MCF 10A (cell line): ENCODE measurements at regions of chr12 and their contacts with region 1.

Region 1: DNA sequence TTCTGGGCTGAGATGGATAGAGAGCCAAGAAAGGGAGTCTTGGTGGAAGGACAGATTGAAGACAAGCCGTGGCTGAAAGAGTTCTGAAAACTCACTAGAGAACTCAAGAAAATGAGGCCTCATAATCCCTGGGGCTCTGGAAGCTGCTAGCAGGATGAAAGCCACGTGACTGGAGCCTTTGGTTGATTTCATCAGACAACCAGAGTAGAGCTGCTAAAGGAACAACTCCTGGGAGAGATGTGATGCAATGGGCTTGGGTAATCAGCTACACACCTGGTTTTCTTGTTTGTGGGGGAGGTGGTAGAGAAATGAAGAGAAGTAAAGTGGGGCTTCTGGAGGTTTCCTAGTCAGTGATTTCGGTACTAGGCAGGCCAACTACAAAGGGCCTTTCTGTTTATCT is 13.4 kb downstream of the CSRNP2 start:
- DNase-seq: peak; percentile 97
- H3K4me3 Mint-ChIP-seq: peak overlapping the region; percentile 35
- H3K27ac Mint-ChIP-seq: peak overlapping the region; percentile 83
- H3K4me1 Mint-ChIP-seq: peaks cover 10% of the 10 kb centered on the region
- H3K27me3 Mint-ChIP-seq: no peaks in the 10 kb centered on the region
- CTCF ChIP-seq: no peak

Region 2: DNA sequence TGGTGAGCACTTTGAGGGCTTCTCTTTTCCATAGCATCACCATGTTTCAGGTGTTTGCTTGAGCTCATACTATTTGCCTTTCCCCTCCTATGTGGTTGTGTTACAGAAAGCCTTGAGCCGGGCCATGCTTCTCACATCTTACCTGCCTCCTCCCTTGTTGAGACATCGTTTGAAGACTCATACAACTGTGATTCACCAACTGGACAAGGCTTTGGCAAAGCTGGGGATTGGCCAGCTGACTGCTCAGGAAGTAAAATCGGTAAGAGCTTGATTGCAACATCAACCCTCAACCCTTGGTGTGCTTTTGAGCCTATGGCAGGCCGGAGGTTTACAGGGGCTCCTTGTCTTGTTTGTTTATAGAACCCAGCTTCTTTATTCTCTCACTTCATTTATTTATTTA is 13.8 kb before region 1 on chr12:
- CTCF ChIA-PET with region 1: interaction called, 4 read pairs
- POLR2A ChIA-PET with region 1: interaction called, 16 read pairs
- intact Hi-C with region 1: no loop called
- DNase-seq: peak; percentile 97
- H3K4me3 Mint-ChIP-seq: peak overlapping the region; percentile 3
- H3K27ac Mint-ChIP-seq: peak overlapping the region; percentile 3
- H3K4me1 Mint-ChIP-seq: peaks cover 15% of the 10 kb centered on the region
- H3K27me3 Mint-ChIP-seq: no peaks in the 10 kb centered on the region
- CTCF ChIP-seq: no peak

Region 3: DNA sequence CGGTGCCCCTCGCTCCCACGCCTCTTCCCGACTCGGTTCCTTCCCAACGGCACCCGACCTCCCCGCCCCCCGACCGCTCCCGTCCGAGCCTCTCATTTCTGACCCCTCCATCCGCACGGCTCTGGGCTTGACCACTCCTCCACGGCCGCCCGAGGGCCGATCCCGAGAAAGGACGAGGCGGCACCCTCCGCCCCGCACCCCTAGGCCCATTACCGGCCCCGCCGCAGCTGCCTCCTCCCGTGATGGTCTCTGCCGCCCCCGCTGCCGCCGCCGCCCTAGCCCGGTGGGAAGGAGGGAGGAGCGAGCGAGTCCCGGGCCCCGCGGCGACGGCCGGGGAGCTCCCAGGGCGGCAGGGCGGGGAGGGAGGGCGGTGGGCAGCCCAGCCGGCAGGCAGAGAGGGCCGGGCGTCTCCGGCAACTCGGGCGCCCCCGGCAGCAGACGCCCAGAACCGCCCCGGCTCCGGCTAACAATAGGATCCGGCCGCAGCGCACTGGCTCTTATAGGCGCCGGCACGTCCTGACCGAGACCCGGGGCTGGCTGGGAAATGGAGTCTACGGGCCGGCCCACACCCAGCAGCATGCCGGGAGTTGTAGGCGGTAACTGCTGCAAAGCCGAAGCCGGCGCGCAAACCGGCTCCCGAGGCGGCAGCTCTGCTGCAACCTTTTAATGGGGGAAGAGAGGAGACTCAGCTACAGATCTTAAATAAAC is 13.3 kb after region 1 on chr12 and contains the start of gene CSRNP2:
- CTCF ChIA-PET with region 1: interaction called, 4 read pairs
- POLR2A ChIA-PET with region 1: interaction called, 70 read pairs
- intact Hi-C with region 1: no loop called
- DNase-seq: peak; percentile 93
- H3K4me3 Mint-ChIP-seq: peak within 1 kb of the TSS; percentile 88
- H3K27ac Mint-ChIP-seq: peak within 1 kb of the TSS; percentile 46
- H3K4me1 Mint-ChIP-seq: peaks cover 13% of the 10 kb centered on the region
- H3K27me3 Mint-ChIP-seq: no peaks in the 10 kb centered on the region
- CTCF ChIP-seq: no peak
- total RNA-seq, gene CSRNP2: 41.4 and 46.3 TPM in 2 replicates

Region 4: GRCh38 chr12:51192284-51192671 is 122.3 kb after region 1 on chr12:
- CTCF ChIA-PET with region 1: no interaction called
- POLR2A ChIA-PET with region 1: no interaction called
- intact Hi-C with region 1: no loop called
- DNase-seq: no peak
- H3K4me3 Mint-ChIP-seq: no peak overlapping the region
- H3K27ac Mint-ChIP-seq: no peak overlapping the region
- H3K4me1 Mint-ChIP-seq: no peaks in the 10 kb centered on the region
- H3K27me3 Mint-ChIP-seq: no peaks in the 10 kb centered on the region
- CTCF ChIP-seq: no peak

Region 5: DNA sequence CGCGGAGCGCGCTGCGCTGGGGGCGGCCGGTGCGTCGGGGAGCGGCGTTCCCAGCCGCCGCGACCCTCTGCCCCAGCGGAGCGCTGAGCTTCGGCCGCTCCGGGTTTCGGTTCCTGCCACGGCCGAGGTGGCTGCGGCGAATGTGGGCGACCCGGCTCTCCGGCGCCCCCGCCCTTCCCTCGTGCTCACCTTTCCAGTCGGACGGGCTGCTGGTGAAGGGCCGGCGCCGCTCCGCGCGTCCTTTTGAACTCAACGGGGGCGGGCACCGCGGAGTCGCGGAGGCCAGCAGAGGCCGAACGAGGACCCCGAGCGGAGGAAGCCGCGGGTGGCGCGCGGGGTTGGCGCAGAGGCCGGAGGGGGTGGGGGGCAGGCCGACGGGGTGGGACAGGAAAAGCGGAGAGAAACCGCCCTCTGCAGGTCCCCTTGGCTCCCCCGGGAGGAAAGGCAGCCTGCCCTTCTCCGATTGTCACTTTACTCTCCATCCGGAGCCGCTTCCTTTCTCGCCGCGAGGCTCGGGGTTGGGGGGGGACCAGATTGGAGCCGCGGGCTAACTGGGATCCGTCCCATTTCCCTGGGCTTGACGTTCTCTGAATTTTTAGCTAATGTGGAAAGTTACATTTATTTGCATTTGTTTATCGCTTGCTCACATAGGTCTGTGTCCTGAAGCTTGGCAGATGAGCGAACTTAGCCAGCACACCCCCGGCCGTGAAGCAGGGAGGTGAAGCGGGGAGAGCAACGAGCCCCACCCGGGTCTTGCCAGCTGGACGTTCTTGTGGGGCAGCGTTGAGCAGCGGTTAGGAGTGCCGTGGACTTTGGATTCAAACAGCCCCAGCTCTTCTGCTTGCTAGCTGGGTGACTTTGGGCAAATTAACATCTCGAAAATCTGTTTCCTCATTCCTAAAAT is 200.3 kb after region 1 on chr12 and contains the start of gene SMAGP:
- CTCF ChIA-PET with region 1: no interaction called
- POLR2A ChIA-PET with region 1: interaction called, 11 read pairs
- intact Hi-C with region 1: no loop called
- DNase-seq: peak; percentile 44
- H3K4me3 Mint-ChIP-seq: peak within 1 kb of the TSS; percentile 87
- H3K27ac Mint-ChIP-seq: peak within 1 kb of the TSS; percentile 74
- H3K4me1 Mint-ChIP-seq: peaks cover 17% of the 10 kb centered on the region
- H3K27me3 Mint-ChIP-seq: no peaks in the 10 kb centered on the region
- CTCF ChIP-seq: no peak
- total RNA-seq, gene SMAGP: 17.4 and 19.0 TPM in 2 replicates